ENCODE measurements at regions of chr11 and their contacts with region 1.

Region 1: GRCh38 chr11:72471005-72471898 is 36.9 kb upstream of the CLPB start:
- DNase-seq: peak; percentile 81 to 84
- H3K4me3 ChIP-seq: no peak overlapping the region
- H3K4me3 Mint-ChIP-seq: no peak overlapping the region
- H3K27ac Mint-ChIP-seq: no peak overlapping the region
- H3K4me1 ChIP-seq: no peaks in the 10 kb centered on the region
- H3K4me1 Mint-ChIP-seq: peaks cover 7% of the 10 kb centered on the region
- H3K27me3 ChIP-seq: no peaks in the 10 kb centered on the region; the same call in 1 of the 2 replicates
- H3K27me3 Mint-ChIP-seq: peaks cover 12% of the 10 kb centered on the region
- CTCF ChIP-seq: peak; percentile 94 to 96

Region 2: GRCh38 chr11:72446902-72447769 is 24.1 kb before region 1 on chr11:
- CTCF ChIA-PET with region 1: interaction called, 14 read pairs
- POLR2A ChIA-PET with region 1: no interaction called
- intact Hi-C with region 1: no loop called
- DNase-seq: peak in 1 of 2 experiments; percentile 68
- H3K4me3 ChIP-seq: no peak overlapping the region
- H3K4me3 Mint-ChIP-seq: no peak overlapping the region
- H3K27ac Mint-ChIP-seq: no peak overlapping the region
- H3K4me1 ChIP-seq: no peaks in the 10 kb centered on the region
- H3K4me1 Mint-ChIP-seq: no peaks in the 10 kb centered on the region
- H3K27me3 ChIP-seq: no peaks in the 10 kb centered on the region
- H3K27me3 Mint-ChIP-seq: peaks cover 10% of the 10 kb centered on the region
- CTCF ChIP-seq: peak; percentile 93 to 96

Region 3: DNA sequence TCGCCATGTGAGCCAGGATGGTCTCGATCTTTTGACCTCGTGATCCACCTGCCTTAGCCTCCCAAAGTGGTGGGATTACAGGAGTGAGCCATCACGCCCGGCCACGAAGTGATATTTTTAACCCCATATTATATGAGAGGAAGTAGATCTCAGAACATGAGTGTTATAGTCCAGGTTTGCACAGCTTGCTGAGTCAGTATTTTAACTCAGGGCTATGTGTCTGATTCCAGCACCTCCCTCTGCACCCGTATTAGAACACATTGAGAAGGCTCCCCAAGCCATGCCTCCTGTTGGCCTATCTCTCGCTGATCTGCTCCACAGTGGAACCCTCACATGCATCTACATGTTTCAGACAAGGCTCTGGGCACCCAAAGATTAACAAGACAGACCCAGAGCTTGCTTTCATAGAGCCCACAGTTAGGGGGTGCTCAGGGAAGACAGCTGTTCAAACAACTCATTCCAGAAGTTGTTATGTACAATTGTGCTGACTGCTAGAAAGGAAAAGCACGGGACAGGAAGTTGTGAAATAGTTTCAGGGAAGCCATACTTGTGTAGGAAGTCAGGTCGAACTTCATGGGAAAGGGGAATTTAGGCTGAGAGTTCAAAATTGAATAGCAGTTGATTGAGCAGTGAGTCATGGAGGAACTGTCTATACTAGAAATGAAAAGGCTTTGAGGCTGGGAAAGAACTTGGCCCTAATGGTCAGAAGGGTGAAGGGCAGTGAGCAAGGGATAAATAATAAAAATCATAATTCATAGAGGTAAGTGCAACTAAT is 12.3 kb after region 1 on chr11:
- CTCF ChIA-PET with region 1: interaction called, 26 read pairs
- POLR2A ChIA-PET with region 1: no interaction called
- intact Hi-C with region 1: no loop called
- DNase-seq: no peak
- H3K4me3 ChIP-seq: no peak overlapping the region
- H3K4me3 Mint-ChIP-seq: no peak overlapping the region
- H3K27ac Mint-ChIP-seq: no peak overlapping the region
- H3K4me1 ChIP-seq: no peaks in the 10 kb centered on the region
- H3K4me1 Mint-ChIP-seq: peaks cover 16% of the 10 kb centered on the region
- H3K27me3 ChIP-seq: no peaks in the 10 kb centered on the region
- H3K27me3 Mint-ChIP-seq: no peaks in the 10 kb centered on the region
- CTCF ChIP-seq: no peak

Region 4: GRCh38 chr11:72561856-72562255 is 90.6 kb after region 1 on chr11:
- CTCF ChIA-PET with region 1: interaction called, 12 read pairs
- POLR2A ChIA-PET with region 1: no interaction called
- intact Hi-C with region 1: no loop called
- DNase-seq: no peak
- H3K4me3 ChIP-seq: no peak overlapping the region
- H3K4me3 Mint-ChIP-seq: no peak overlapping the region
- H3K27ac Mint-ChIP-seq: no peak overlapping the region
- H3K4me1 ChIP-seq: peaks cover 13% of the 10 kb centered on the region
- H3K4me1 Mint-ChIP-seq: peaks cover 6% of the 10 kb centered on the region
- H3K27me3 ChIP-seq: no peaks in the 10 kb centered on the region
- H3K27me3 Mint-ChIP-seq: no peaks in the 10 kb centered on the region
- CTCF ChIP-seq: no peak

Region 5: GRCh38 chr11:72591785-72592490 is 120.7 kb after region 1 on chr11:
- CTCF ChIA-PET with region 1: interaction called, 31 read pairs
- POLR2A ChIA-PET with region 1: no interaction called
- intact Hi-C with region 1: no loop called
- DNase-seq: no peak
- H3K4me3 ChIP-seq: no peak overlapping the region
- H3K4me3 Mint-ChIP-seq: no peak overlapping the region
- H3K27ac Mint-ChIP-seq: no peak overlapping the region
- H3K4me1 ChIP-seq: no peaks in the 10 kb centered on the region
- H3K4me1 Mint-ChIP-seq: no peaks in the 10 kb centered on the region
- H3K27me3 ChIP-seq: peaks cover 8% of the 10 kb centered on the region
- H3K27me3 Mint-ChIP-seq: peaks cover 49% of the 10 kb centered on the region
- CTCF ChIP-seq: no peak

Region 6: DNA sequence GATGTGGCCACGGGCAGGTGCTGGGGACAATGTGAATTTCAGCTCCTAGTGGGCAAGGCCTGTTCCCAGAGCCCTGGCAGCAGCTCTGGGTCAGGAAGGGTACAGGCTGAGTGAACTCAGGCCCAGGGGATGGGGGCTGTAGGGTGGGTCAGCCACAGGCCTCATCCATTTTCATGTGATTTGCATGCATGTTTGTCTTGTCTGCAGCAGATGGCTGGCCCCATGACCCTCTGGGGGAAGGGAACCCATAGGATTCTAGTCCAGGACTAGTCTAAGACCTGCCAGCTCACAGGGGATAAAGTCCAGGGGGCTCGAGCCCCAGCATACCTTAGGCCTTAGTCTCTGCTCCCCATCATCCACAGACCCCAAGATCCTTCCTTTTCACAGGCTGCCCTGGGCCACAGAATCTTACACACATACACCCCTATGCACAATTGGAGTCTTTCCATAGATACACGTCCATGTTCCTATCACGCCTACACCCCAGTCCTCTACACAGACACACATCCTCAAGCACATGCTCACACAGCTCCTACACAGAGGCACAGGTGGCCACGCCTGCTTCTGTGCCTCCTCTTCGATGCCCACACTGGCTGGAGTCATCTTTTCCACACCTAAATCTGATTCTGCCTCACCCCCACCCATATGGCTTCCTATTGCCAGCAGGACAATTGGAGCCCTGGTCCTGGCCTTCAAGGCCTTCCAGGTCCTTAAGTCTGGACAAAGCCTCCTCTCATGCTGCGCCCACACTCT is 177.3 kb after region 1 on chr11:
- CTCF ChIA-PET with region 1: interaction called, 42 read pairs
- POLR2A ChIA-PET with region 1: no interaction called
- intact Hi-C with region 1: loop called (anchors 1 kb)
- DNase-seq: no peak
- H3K4me3 ChIP-seq: no peak overlapping the region
- H3K4me3 Mint-ChIP-seq: no peak overlapping the region
- H3K27ac Mint-ChIP-seq: no peak overlapping the region
- H3K4me1 ChIP-seq: no peaks in the 10 kb centered on the region
- H3K4me1 Mint-ChIP-seq: no peaks in the 10 kb centered on the region
- H3K27me3 ChIP-seq: no peaks in the 10 kb centered on the region; the same call in 1 of the 2 replicates
- H3K27me3 Mint-ChIP-seq: peaks cover 11% of the 10 kb centered on the region
- CTCF ChIP-seq: no peak

Measured in Caco-2 (cell line).